ENCODE measurements at regions of chr18 and their contacts with region 1.

Region 1: DNA sequence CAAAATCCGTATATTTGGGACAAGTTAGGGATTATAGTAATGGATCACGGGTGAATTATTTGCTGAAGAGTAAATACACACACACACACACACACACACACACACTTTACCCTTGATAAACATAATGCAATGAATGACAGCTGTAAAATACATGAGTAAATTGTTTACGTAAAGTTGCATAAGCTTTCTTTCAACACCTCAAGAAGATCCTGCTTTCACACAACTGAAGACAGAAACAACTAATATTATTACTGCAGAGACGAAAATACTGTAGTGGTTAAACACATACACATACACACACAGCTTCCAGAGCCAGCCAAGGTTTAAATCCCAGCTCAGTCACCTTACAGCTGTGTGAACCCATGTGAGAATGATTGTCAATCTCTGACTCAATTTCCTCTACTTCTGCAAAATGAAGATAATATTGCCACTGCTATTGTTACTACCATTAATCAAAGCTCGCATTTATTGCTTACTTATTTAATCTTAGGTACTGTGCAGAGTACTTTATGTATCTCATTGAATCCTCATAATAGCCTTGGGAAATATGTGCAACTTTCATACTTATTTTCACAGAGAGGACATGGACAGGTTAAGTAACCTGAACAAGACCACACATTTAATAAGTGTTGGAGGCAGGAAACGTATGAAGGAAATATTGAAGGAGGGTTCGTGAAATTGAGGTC is 50.6 kb upstream of the DOK6 start:
- DNase-seq: no peak
- H3K4me3 ChIP-seq: no peak overlapping the region
- H3K27ac ChIP-seq: no peak overlapping the region
- H3K4me1 ChIP-seq: no peaks in the 10 kb centered on the region
- H3K27me3 ChIP-seq: no peaks in the 10 kb centered on the region
- CTCF ChIP-seq: no peak
- POLR2A ChIP-seq: no peak

Region 2: DNA sequence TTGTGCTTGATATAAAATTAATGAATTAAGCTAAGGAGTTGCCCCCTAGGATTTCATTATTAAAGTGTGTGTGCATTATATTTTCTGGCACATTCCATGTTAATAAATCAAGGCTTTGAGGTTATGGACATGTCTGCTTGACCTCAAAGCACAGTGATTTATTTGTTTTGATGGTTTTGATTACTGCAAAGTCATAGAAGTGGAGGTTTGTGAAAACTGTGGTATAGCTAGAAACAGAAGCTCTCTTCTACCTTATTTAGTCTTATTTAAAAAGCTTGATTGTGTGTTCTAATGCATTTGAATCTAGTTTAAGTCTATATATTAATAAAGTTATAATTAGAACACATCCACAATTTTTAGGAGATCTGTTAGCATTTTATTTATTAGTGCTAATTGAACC is 82.8 kb after region 1 on chr18:
- CTCF ChIA-PET with region 1: no interaction called
- POLR2A ChIA-PET with region 1: no interaction called
- dilution Hi-C with region 1: no loop called
- intact Hi-C with region 1: loop called (anchors 10 kb)
- DNase-seq: no peak
- H3K4me3 ChIP-seq: no peak overlapping the region
- H3K27ac ChIP-seq: no peak overlapping the region
- H3K4me1 ChIP-seq: no peaks in the 10 kb centered on the region
- H3K27me3 ChIP-seq: no peaks in the 10 kb centered on the region
- CTCF ChIP-seq: no peak
- POLR2A ChIP-seq: no peak

Region 3: GRCh38 chr18:69557282-69557681 is 207.2 kb after region 1 on chr18:
- CTCF ChIA-PET with region 1: no interaction called
- POLR2A ChIA-PET with region 1: no interaction called
- dilution Hi-C with region 1: no loop called
- intact Hi-C with region 1: no loop called
- DNase-seq: no peak
- H3K4me3 ChIP-seq: no peak overlapping the region
- H3K27ac ChIP-seq: no peak overlapping the region
- H3K4me1 ChIP-seq: no peaks in the 10 kb centered on the region
- H3K27me3 ChIP-seq: no peaks in the 10 kb centered on the region
- CTCF ChIP-seq: no peak
- POLR2A ChIP-seq: no peak

Measured in endothelial cell of umbilical vein (primary cell).